ENCODE measurements at regions of chr7 and their contacts with region 1.

Region 1: GRCh38 chr7:98280791-98281756 is at the start of gene BRI3:
- H3K4me3 Mint-ChIP-seq: peak within 1 kb of the TSS; percentile 95
- H3K27ac Mint-ChIP-seq: peak within 1 kb of the TSS; percentile 97
- H3K4me1 Mint-ChIP-seq: peaks cover 53% of the 10 kb centered on the region
- H3K27me3 Mint-ChIP-seq: no peaks in the 10 kb centered on the region

Region 2: GRCh38 chr7:96321658-96322372 is 1959.3 kb before region 1 on chr7 and contains the start of gene SLC25A13:
- intact Hi-C with region 1: loop called (anchors 10 kb)
- H3K4me3 Mint-ChIP-seq: peak within 1 kb of the TSS; percentile 89
- H3K27ac Mint-ChIP-seq: peak within 1 kb of the TSS; percentile 96
- H3K4me1 Mint-ChIP-seq: peaks cover 36% of the 10 kb centered on the region
- H3K27me3 Mint-ChIP-seq: no peaks in the 10 kb centered on the region

Region 3: DNA sequence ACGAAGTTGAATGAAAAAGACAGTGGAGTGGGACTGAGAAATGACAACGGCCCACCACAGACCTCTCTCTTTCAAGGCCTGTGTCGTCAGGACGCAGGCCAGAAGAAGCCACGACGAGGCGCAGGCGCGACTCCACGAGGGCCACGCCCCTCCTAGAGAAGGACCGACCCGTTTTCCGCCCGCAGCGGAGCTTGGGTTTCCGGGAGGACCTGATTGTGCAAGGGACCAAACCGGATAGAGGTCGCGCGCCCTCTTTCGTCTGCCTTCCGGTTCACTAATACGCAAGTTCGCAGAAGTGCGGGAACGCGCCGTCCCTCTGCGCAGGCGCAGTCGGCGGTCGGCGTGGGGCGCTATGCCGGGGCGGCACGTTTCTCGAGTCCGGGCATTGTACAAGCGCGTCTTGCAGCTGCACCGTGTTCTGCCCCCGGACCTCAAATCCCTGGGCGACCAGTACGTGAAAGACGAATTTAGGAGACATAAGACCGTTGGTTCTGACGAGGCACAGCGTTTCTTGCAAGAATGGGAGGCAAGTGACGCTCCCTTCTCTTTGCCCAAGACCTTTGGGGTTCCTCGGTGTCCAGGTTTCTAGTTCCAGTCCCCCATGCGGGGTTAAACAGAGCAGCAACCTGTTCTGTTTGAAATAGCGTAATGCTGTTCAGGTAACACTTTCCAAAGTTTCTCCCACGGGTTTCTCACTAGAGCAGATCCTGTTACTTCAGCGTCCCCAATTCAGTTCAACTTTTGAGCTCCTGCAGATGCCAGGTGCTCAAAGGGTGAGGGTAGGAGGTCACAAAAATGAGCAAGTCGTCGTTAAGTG is 1163.5 kb before region 1 on chr7 and contains the start of gene SDHAF3:
- intact Hi-C with region 1: loop called (anchors 10 kb)
- H3K4me3 Mint-ChIP-seq: peak within 1 kb of the TSS; percentile 92
- H3K27ac Mint-ChIP-seq: peak within 1 kb of the TSS; percentile 89
- H3K4me1 Mint-ChIP-seq: peaks cover 36% of the 10 kb centered on the region
- H3K27me3 Mint-ChIP-seq: no peaks in the 10 kb centered on the region

Region 4: GRCh38 chr7:98000356-98000755 is 280.7 kb before region 1 on chr7:
- intact Hi-C with region 1: no loop called
- H3K4me3 Mint-ChIP-seq: no peak overlapping the region
- H3K27ac Mint-ChIP-seq: no peak overlapping the region
- H3K4me1 Mint-ChIP-seq: no peaks in the 10 kb centered on the region
- H3K27me3 Mint-ChIP-seq: peaks cover 14% of the 10 kb centered on the region

Region 5: DNA sequence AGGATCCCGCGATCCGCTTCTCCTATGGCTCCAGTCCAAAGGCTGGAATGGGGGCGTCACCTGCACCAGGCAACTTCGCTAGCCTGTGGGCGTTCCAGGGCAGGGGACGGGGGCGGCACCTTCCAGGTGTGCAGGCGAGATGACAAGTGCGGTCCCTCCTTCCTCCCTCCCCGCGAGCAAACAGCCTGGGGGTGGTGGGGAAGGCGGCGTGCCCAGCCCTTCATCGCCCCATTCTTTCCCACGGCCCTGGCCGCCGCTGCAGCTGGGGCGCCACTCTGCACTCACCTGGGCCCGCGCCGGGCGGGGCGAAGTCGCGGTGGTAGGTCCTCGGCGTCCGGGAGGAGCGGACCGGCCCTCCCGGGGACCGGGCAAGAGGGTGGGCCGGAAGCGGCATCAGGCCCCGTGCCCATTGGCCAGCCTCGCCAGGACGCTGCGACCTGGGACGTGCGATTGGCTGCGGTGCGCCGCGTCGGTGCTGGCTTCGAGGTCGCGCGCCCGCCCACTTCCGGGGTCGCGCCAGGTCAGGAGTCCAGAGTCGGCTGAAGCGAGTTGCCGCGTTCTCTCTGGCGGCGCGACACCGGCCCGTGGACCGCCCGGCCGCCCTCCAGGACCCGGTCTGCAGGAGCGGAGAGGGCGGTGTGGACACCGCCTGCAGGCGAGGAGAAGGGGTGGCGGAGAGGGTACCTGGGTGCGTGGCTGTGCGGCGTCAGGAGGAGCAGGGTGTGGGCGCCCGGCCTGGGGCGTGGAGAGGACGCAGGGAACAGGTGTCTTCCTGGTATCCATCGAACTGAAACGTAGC is 29.0 kb before region 1 on chr7 and contains the start of gene TECPR1:
- intact Hi-C with region 1: loop called (anchors 1 kb)
- H3K4me3 Mint-ChIP-seq: peak within 1 kb of the TSS; percentile 98
- H3K27ac Mint-ChIP-seq: peak within 1 kb of the TSS; percentile 91
- H3K4me1 Mint-ChIP-seq: peaks cover 59% of the 10 kb centered on the region
- H3K27me3 Mint-ChIP-seq: no peaks in the 10 kb centered on the region

Region 6: DNA sequence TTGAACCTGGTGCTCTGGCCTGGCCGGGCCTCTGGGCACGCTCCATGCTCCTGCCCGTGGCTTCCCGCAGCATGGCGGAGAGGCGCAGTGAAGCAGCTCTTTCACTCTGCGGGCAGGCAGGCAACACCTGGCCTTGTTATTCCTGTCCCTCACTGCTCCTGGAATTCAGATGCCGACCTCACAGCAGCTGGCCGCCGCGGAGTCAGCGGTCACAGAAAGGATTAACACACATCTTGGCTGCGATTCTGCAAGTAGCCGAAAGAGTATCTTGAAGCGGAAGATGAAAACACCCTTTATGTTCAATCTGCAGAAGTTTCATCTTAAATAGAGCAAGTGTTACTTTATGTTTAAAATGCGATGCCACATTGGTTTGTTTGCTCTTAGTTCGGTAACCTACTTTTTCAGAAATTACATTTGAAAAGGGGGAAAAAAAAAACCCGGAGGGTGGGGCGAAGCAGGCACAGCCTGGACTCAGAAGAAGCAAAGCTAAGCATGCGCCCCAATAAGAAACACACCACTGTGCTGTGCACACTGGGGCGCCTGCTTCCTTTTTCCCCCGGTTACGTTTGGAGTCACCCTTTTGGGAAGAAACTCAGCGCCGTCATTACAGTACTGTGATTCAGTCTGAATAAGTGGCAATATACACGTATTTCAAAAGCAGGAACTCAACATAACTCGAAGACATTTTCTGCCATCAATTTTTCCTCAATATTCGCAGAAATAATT is 42.7 kb after region 1 on chr7:
- intact Hi-C with region 1: no loop called
- H3K4me3 Mint-ChIP-seq: no peak overlapping the region
- H3K27ac Mint-ChIP-seq: no peak overlapping the region
- H3K4me1 Mint-ChIP-seq: no peaks in the 10 kb centered on the region
- H3K27me3 Mint-ChIP-seq: peaks cover 15% of the 10 kb centered on the region

Region 7: DNA sequence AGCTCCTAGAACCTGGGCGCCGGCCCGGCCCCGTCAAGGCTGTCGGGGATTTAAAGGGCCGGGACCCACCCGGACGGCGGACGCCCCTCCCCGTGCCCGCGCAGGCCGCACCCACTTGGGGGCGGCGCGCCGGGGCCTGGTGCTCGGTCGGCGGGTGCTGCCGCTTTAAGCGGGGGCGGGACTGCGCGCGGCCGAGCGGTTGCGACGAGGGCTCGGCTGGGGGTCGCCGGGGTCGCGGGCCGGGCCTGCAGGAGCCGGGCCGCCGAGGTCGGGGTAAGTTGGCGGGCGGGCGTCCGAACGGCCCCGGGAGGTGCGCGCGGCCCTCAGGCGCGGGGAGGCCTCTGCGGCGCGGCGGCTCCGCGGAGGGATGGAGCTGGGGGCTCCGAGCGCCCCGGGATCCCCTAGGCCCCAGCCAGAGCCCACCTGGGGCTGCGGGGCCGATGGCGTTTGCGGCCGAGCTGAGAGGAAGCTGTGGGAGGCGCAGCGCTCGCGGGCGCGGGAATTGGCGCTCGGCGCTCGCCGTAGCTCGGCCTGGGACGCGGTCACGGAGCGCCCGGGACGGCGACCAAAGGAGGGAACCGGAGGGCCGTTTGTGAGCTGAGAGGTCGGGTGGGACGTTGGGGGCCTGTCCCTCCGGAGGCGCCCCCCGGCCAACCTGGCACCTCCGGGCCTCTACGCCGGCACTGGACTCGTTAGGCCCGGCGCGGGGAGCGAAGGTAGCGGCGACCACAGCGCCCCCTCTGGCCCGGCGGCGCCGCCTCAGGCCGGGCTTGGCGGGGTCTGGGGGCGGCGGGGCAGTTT is 597.5 kb after region 1 on chr7 and contains the start of gene TRRAP:
- intact Hi-C with region 1: loop called (anchors 10 kb)
- H3K4me3 Mint-ChIP-seq: peak within 1 kb of the TSS; percentile 93
- H3K27ac Mint-ChIP-seq: peak within 1 kb of the TSS; percentile 91
- H3K4me1 Mint-ChIP-seq: peaks cover 21% of the 10 kb centered on the region
- H3K27me3 Mint-ChIP-seq: peaks cover 21% of the 10 kb centered on the region

Region 8: DNA sequence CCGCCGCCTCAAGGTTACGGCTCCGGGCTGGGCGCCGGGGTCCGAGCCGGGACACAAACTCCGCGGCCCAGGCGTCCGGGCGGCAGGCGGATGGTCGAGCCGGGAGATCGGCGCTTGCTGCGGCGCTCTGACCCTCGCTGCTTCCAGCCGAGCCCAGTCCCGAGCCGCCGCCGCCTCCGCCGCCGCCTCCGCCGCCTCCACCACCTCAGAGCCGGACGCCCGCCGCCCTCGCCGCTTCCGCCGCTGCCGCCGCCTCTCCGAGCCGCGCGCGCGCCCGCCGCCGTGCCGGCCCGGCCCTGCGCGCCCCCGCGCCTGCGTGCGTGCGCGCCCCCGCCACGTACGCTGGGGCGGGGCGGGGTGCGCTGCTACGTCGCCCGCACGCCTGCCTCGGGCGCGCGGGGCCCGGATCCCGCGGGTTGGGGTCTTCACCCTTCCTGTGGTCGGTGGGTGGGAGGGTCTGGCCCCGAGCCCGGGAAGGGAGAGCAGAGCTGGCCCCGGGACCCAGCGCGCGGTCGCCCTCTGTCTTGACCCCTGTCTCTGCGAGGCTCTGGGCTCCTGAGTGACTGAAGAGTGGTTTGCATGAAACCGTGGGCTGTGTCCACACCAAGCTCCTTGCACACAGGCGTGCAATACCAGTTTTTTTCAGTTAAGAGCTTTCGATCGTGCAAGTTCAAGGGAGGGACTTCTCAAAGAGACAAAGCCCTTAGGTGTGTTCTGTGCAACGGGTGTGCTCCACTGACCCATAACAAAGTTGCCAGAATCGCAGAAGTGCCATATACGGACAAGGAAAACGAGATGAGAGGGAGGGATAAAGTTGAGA is 863.0 kb after region 1 on chr7 and contains the start of gene SMURF1:
- intact Hi-C with region 1: no loop called
- H3K4me3 Mint-ChIP-seq: peak within 1 kb of the TSS; percentile 79
- H3K27ac Mint-ChIP-seq: peak within 1 kb of the TSS; percentile 84
- H3K4me1 Mint-ChIP-seq: peaks cover 42% of the 10 kb centered on the region
- H3K27me3 Mint-ChIP-seq: no peaks in the 10 kb centered on the region

Measured in dendritic cell treated with granulocyte-macrophage colony-stimulating factor and Interleukin-4, amounts not matched to agents 40 ng/mL and 50 ng/mL, for 4 days (primary cell).